CD8-positive, alpha-beta T cell (primary cell): ENCODE measurements at regions of chr10 and their contacts with region 1.

Region 1: GRCh38 chr10:80187465-80188409 is 17.6 kb downstream of the ANXA11 start:
- DNase-seq: peak; percentile 65 to 94 (median 83)
- ATAC-seq: peak; percentile 90
- H3K4me3 ChIP-seq: peak overlapping the region; percentile 34 to 42
- H3K4me3 Mint-ChIP-seq: peak overlapping the region; percentile 70
- H3K27ac ChIP-seq: peak overlapping the region; percentile 64 to 71
- H3K27ac Mint-ChIP-seq: peak overlapping the region; percentile 95
- H3K4me1 ChIP-seq: peaks cover 92% of the 10 kb centered on the region
- H3K4me1 Mint-ChIP-seq: peaks cover 86% of the 10 kb centered on the region
- H3K27me3 ChIP-seq: no peaks in the 10 kb centered on the region
- H3K27me3 Mint-ChIP-seq: no peaks in the 10 kb centered on the region
- CTCF ChIP-seq: no peak

Region 2: GRCh38 chr10:80144067-80144695 is 43.6 kb before region 1 on chr10:
- CTCF ChIA-PET with region 1: interaction called, 8 read pairs
- POLR2A ChIA-PET with region 1: interaction called, 19 read pairs
- intact Hi-C with region 1: loop called in 1 of 2 experiments (anchors 5 kb)
- DNase-seq: peak in 7 of 9 experiments; percentile 16 to 64 (median 29)
- ATAC-seq: peak; percentile 45
- H3K4me3 ChIP-seq: peak overlapping the region; percentile 48 to 51
- H3K4me3 Mint-ChIP-seq: peak overlapping the region; percentile 83
- H3K27ac ChIP-seq: no peak overlapping the region
- H3K27ac Mint-ChIP-seq: peak overlapping the region; percentile 75
- H3K4me1 ChIP-seq: peaks cover 17% of the 10 kb centered on the region
- H3K4me1 Mint-ChIP-seq: peaks cover 17% of the 10 kb centered on the region
- H3K27me3 ChIP-seq: no peaks in the 10 kb centered on the region
- H3K27me3 Mint-ChIP-seq: peaks cover 7% of the 10 kb centered on the region
- CTCF ChIP-seq: peak; percentile 9